ENCODE measurements at regions of chr5 and their contacts with region 1.

Region 1: DNA sequence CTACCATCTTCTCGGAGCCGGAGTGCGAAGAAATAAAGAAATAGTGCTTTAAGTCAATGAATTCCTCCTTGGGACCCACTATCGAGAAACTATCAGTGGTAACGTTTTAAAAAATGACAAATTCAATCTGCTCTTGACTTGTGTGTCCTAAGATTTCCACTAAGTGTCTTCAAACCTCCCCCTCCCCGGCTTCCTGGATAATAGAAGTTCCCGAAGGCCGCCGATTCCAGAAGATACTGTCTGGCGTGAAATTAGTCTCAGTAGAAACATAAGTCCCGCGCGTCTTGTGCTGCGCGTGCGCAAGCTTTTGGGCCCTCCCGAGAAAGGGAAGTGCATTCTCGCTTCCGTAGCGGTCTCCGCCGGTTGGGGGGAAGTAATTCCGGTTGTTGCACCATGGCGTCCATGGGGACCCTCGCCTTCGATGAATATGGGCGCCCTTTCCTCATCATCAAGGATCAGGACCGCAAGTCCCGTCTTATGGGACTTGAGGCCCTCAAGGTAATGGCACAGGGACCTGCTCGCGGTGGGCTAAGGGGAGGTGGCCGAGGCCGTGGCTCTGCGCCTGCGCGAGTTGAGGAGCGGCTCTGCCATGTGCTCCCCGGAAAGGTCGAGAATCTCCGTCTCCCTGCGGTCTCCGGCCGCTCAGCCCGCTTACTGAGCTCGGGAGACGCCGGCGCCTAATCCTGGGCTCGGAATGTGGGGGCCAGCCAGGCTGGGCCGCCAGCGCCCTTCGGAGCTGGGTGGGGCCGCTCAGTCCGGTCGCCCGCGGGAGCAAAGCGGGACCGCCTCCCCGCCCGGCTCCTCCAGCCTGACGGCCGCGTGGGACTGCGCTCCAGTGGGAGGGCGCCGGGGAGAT is at the start of gene CCT5:
- DNase-seq: peak; percentile 95 to 99
- ATAC-seq: peak; percentile 86 to 88
- H3K4me3 ChIP-seq: peak within 1 kb of the TSS; percentile 87
- H3K27ac ChIP-seq: peak within 1 kb of the TSS; percentile 88 to 98
- H3K4me1 ChIP-seq: peaks cover 31% of the 10 kb centered on the region
- CTCF ChIP-seq: no peak
- EP300 ChIP-seq: no peak; a peak in 1 of 5 replicates
- POLR2A ChIP-seq: peak; percentile 89
- RAD21 ChIP-seq: no peak
- polyA plus RNA-seq, gene CCT5: 569 and 730 TPM in 2 replicates

Region 2: GRCh38 chr5:10262121-10262774 is 12.1 kb after region 1 on chr5:
- CTCF ChIA-PET with region 1: interaction called, 7 read pairs
- POLR2A ChIA-PET with region 1: interaction called, 29 read pairs
- DNase-seq: no peak
- ATAC-seq: no peak
- H3K4me3 ChIP-seq: no peak overlapping the region
- H3K27ac ChIP-seq: no peak overlapping the region
- H3K4me1 ChIP-seq: peaks cover 4% of the 10 kb centered on the region
- CTCF ChIP-seq: no peak
- EP300 ChIP-seq: no peak
- POLR2A ChIP-seq: no peak
- RAD21 ChIP-seq: no peak

Region 3: DNA sequence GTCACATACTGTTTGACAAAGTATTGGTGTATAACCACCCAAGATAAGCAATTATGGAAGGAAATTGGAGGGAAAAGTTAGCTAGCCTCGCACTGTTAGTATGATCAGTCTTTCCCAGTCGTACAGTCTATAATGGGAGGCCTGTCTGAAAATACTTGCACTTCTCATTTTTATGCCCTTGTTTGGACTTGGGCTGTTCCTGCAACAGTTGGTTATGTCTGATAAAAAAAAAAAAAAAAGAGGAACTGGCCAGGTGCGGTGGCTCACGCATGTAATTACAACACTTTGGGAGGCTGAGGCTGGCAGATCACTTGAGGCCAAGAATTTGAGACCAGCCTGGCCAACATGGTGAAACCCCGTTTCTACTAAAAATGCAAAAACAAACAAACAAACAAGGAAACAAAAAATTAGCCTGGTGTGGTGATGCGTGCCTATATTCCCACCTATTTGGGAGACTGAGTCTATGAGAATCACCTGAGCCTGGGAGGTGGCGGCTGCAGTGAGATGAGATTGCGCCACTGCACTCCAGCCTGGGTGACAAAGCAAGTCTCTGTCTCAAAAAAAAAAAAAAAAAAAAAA is 255.4 kb after region 1 on chr5:
- CTCF ChIA-PET with region 1: no interaction called
- POLR2A ChIA-PET with region 1: no interaction called
- DNase-seq: no peak
- ATAC-seq: no peak
- H3K4me3 ChIP-seq: no peak overlapping the region
- H3K27ac ChIP-seq: peak overlapping the region in 1 of 2 experiments; percentile 78; a peak in 3 of 6 replicates
- H3K4me1 ChIP-seq: peaks cover 84% of the 10 kb centered on the region
- CTCF ChIP-seq: no peak
- EP300 ChIP-seq: no peak
- POLR2A ChIP-seq: no peak
- RAD21 ChIP-seq: no peak